ENCODE measurements at regions of chr20 and their contacts with region 1.

Region 1: GRCh38 chr20:35269055-35269781 is 8.7 kb downstream of the MMP24OS start:
- DNase-seq: peak; percentile 61
- H3K4me3 ChIP-seq: no peak overlapping the region
- H3K27ac ChIP-seq: peak overlapping the region; percentile 37 to 48
- H3K4me1 ChIP-seq: no peaks in the 10 kb centered on the region
- H3K27me3 ChIP-seq: no peaks in the 10 kb centered on the region
- CTCF ChIP-seq: peak; percentile 72 to 77 (median 74)
- POLR2A ChIP-seq: no peak

Region 2: GRCh38 chr20:35092524-35093266 is 176.5 kb before region 1 on chr20 and contains the start of gene TRPC4AP:
- intact Hi-C with region 1: loop called (anchors 2 kb)
- DNase-seq: peak; percentile 81
- H3K4me3 ChIP-seq: peak within 1 kb of the TSS; percentile 71 to 96
- H3K27ac ChIP-seq: peak within 1 kb of the TSS; percentile 94
- H3K4me1 ChIP-seq: peaks cover 3% of the 10 kb centered on the region
- H3K27me3 ChIP-seq: no peaks in the 10 kb centered on the region
- CTCF ChIP-seq: peak; percentile 97 to 99 (median 98)
- POLR2A ChIP-seq: peak; percentile 83
- total RNA-seq, gene TRPC4AP: 65.4 to 76.6 TPM

Region 3: DNA sequence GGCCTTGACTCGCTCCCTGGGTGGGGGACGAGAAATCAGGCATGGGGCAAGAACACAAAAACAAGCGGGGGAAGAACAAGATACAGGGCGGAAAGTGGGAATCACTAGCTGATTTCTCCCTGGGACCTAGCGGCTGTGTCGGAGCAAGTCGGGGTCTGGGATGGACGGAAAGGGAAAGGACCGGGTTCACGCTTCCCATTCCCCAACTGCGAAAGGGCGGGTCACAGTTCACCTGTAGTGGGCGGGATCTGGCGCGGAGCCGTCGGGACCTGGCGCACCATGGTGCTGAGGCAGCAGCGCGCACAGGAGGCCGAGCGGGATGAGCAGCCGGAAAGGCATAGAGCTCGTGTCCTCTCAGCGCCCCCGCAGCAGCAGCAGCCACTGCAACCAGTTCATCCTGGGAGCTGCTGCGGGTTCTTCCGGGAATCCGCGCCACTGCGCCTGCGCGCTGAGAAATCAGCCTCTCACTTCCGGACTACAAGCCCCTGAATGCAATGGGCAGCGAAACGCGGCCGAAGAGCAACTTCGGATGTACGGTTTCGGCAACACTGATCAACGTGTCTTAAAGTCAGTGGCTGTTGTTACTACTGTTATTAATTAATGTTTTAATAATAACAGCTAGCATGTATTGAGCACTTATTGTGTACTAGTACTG is 122.2 kb before region 1 on chr20 and contains the start of gene EDEM2:
- intact Hi-C with region 1: loop called (anchors 5 kb)
- DNase-seq: peak; percentile 91
- H3K4me3 ChIP-seq: peak within 1 kb of the TSS; percentile 59 to 76
- H3K27ac ChIP-seq: peak within 1 kb of the TSS; percentile 71 to 73
- H3K4me1 ChIP-seq: peaks cover 5% of the 10 kb centered on the region
- H3K27me3 ChIP-seq: no peaks in the 10 kb centered on the region
- CTCF ChIP-seq: peak in 2 of 4 experiments; percentile 16 to 38
- POLR2A ChIP-seq: peak; percentile 54
- total RNA-seq, gene EDEM2: 27.1 to 30.0 TPM

Region 4: GRCh38 chr20:35207950-35208611 is 61.1 kb before region 1 on chr20:
- intact Hi-C with region 1: loop called (anchors 5 kb)
- DNase-seq: peak; percentile 82
- H3K4me3 ChIP-seq: no peak overlapping the region
- H3K27ac ChIP-seq: peak overlapping the region; percentile 78
- H3K4me1 ChIP-seq: no peaks in the 10 kb centered on the region
- H3K27me3 ChIP-seq: no peaks in the 10 kb centered on the region
- CTCF ChIP-seq: peak; percentile 54 to 90 (median 85)
- POLR2A ChIP-seq: no peak

Region 5: DNA sequence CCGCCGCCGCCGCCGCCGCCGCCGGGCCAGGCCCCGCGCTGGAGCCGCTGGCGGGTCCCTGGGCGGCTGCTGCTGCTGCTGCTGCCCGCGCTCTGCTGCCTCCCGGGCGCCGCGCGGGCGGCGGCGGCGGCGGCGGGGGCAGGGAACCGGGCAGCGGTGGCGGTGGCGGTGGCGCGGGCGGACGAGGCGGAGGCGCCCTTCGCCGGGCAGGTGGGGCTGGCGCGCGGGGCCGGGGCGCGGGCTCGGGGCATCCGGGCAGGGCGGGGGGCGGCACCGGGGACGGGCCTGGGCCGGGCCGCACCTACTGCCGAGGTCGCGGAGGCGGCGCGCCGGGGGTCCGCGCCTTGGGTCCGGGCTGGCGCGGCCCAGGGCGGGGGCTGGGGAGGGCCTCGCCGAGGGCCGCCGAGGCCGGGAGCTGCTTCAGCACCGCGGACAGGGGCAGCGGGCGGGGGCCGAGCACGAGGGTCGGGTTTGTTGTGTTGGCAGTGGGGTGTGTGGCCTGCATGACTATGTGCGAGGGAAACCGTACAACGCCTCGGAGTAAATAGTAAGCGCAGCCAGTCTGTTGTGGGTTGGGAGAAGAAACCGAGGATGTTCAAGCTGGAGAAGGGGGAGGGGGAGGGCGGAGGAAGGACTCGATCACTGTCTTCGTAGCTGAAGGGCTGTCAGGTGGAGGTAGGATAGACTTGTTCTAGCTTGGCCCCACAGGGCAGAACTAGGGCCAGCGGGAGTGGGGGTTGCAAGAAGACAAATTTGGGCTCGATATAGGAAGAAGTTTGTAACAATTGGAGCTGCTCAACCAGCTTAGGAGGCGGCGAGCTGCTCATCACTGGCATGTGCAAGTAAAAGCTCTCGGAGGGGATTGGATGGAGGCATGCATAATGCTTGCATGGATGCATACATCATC is 42.2 kb before region 1 on chr20:
- intact Hi-C with region 1: loop called (anchors 5 kb)
- DNase-seq: no peak
- H3K4me3 ChIP-seq: peak overlapping the region; percentile 15 to 22
- H3K27ac ChIP-seq: no peak overlapping the region
- H3K4me1 ChIP-seq: no peaks in the 10 kb centered on the region
- H3K27me3 ChIP-seq: no peaks in the 10 kb centered on the region
- CTCF ChIP-seq: no peak
- POLR2A ChIP-seq: no peak

Region 6: DNA sequence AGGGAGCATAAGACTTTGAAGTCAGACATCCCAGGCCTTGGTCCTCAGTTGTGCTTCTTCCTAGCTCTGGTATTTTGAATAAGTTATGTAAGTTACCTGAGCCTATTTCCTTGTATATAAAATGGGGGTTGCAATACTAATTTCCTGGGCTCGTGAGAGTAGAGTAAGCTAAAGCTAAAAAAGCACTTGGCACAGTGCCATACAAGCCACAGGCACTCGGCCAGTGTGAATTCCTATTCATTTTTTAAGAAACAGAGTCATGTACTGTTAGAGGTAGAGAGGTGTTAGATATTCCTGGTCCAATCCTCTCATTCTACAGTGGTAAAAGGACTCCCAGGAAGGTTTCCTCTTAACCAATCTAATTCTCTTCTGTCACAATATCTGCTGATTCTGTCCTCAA is 805.8 kb after region 1 on chr20:
- intact Hi-C with region 1: no loop called
- DNase-seq: no peak
- H3K4me3 ChIP-seq: no peak overlapping the region
- H3K27ac ChIP-seq: no peak overlapping the region
- H3K4me1 ChIP-seq: no peaks in the 10 kb centered on the region
- H3K27me3 ChIP-seq: no peaks in the 10 kb centered on the region
- CTCF ChIP-seq: no peak
- POLR2A ChIP-seq: no peak